Gastrocnemius medialis (tissue), 4 donors: ENCODE measurements at regions of chr6 and their contacts with region 1.

Region 1: GRCh38 chr6:108755257-108756240 is 92.7 kb upstream of the ARMC2 start:
- DNase-seq: no peak
- ATAC-seq: peak in 1 of 2 donors; percentile 18
- H3K4me3 ChIP-seq: no peak overlapping the region
- H3K27ac ChIP-seq: peak overlapping the region in 2 of 4 donors; percentile 16 to 18
- H3K4me1 ChIP-seq: peaks cover 13 to 17% of the 10 kb centered on the region in 2 donors
- H3K27me3 ChIP-seq: no peaks in the 10 kb centered on the region
- CTCF ChIP-seq: no peak
- POLR2A ChIP-seq: no peak

Region 2: GRCh38 chr6:108510461-108511319 is 244.9 kb before region 1 on chr6:
- in situ Hi-C with region 1: no loop called
- intact Hi-C with region 1: no loop called
- DNase-seq: no peak
- ATAC-seq: no peak
- H3K4me3 ChIP-seq: no peak overlapping the region
- H3K27ac ChIP-seq: no peak overlapping the region
- H3K4me1 ChIP-seq: no peaks in the 10 kb centered on the region
- H3K27me3 ChIP-seq: no peaks in the 10 kb centered on the region
- CTCF ChIP-seq: no peak
- POLR2A ChIP-seq: no peak

Region 3: GRCh38 chr6:108714766-108715414 is 40.7 kb before region 1 on chr6:
- in situ Hi-C with region 1: no loop called
- intact Hi-C with region 1: loop called (anchors 5 kb)
- DNase-seq: no peak
- ATAC-seq: no peak
- H3K4me3 ChIP-seq: no peak overlapping the region
- H3K27ac ChIP-seq: peak overlapping the region in 1 of 4 donors; percentile 39
- H3K4me1 ChIP-seq: peaks cover 9 to 14% of the 10 kb centered on the region in 2 donors
- H3K27me3 ChIP-seq: no peaks in the 10 kb centered on the region
- CTCF ChIP-seq: no peak
- POLR2A ChIP-seq: no peak